K562 (cell line): ENCODE measurements at regions of chr10 and their contacts with region 1.

Region 1: DNA sequence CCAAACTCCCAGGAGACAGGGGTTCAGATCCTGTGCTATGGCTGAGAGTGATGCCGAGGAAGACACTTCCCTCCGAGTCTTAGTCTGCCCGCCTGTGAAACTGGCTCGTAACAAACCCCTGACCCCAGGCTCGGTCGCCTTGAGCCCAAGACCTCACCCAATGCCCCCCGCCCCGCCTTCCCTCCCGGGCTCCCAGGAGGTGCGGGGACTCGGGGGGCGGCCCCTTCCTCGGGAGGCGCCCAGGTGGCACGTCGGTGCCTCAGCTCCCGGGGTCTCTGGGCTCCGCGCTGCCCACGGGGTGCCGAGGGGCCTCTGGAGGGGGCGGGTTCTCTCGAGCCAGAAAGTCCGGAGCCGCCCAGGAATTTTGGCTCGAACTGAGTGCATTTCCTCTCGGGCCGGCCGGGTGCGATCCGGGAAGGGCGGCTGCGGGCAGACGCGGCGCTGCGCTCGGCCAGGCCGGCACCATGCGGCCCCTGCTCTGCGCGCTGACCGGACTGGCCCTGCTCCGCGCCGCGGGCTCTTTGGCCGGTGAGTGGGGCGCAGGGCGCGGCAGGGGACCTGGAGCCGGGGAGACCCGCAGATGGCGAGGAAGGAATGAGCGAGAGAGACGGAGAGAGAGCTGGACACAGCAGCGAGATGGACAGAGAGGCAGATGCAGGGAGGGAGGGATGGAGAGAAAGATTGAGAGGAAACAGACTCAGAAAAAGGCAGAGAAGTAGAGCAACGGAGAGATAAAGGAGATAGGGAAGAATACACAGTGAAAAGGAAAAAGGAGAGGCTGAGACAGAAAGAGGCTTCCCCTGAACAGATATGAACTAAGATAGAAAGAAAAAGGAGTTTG is at the start of gene PLAC9:
- DNase-seq: no peak
- ATAC-seq: no peak
- H3K4me3 ChIP-seq: no peak within 1 kb of the TSS
- H3K27ac ChIP-seq: no peak within 1 kb of the TSS
- H3K4me1 ChIP-seq: peaks cover 0 to 6% of the 10 kb centered on the region in 2 experiments; a peak in 1 of 5 replicates
- H3K27me3 ChIP-seq: peaks cover 34 to 54% of the 10 kb centered on the region in 2 experiments
- CTCF ChIP-seq: no peak
- EP300 ChIP-seq: no peak
- POLR2A ChIP-seq: no peak
- RAD21 ChIP-seq: no peak
- polyA plus RNA-seq, gene PLAC9: not detected

Region 2: DNA sequence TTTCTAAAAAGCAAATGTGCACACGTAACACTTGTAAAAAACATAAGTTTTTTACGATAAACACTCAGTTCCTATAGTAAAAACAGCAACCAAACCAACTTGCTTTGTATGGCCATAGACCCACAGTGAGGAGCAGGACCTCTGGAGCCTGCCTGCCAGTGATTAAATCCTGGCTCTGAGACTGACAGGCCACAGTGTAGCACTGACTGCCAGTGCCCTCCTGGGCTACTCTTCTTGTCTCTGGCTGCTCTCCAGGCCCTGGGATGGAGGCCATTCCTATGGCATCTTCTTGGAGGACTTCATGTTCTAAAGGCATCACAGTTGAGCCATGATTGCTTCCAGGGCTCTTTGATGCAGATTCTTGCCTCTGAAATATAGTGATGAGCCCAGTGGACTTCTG is 76.8 kb before region 1 on chr10:
- CTCF ChIA-PET with region 1: no interaction called
- POLR2A ChIA-PET with region 1: no interaction called
- in situ Hi-C with region 1: loop called (anchors 5 kb)
- intact Hi-C with region 1: loop called (anchors 2 kb)
- DNase-seq: no peak
- ATAC-seq: 0 out of 3 replicates have a peak, but pooled peaks have one; percentile 35
- H3K4me3 ChIP-seq: no peak overlapping the region
- H3K27ac ChIP-seq: no peak overlapping the region
- H3K4me1 ChIP-seq: no peaks in the 10 kb centered on the region
- H3K27me3 ChIP-seq: peaks cover 3 to 16% of the 10 kb centered on the region in 2 experiments; a peak in 3 of 5 replicates
- CTCF ChIP-seq: no peak
- EP300 ChIP-seq: no peak
- POLR2A ChIP-seq: no peak
- RAD21 ChIP-seq: no peak

Region 3: DNA sequence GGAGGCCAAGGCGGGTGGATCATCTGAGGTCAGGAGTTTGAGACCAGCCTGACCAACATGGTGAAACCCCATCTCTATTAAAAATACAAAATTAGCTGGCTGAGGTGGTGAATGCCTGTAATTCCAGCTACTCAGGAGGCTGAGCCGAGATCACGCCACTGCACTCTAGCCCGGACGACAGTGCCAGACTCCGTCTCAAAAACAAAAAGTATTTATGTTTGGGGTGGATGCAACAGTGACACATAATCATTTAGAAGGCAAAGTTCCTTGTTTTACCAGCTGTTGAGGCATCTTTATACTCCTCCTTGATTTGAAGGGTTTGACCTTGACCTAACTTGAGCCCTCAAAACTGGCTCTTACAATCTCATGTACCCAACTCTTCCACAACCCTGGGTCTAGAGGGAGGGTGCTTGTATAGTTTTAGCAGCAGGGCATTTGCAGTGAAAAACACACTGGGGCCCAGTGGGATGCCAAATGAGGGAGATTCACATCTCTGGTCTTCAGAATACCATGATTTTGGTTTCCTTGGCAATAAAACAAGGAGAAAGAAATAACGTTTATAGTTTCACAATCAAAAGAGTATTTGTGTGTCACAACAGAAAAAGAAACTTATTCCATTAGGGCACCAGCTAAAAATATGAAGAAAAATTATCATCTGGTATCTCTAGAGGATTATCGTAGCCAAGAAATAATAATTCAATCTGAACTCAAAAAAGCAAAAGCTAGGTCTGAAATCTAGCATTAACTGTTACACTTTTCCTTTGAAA is 68.2 kb before region 1 on chr10:
- CTCF ChIA-PET with region 1: no interaction called
- POLR2A ChIA-PET with region 1: no interaction called
- in situ Hi-C with region 1: loop called (anchors 5 kb)
- intact Hi-C with region 1: loop called (anchors 2 kb)
- DNase-seq: no peak
- ATAC-seq: no peak
- H3K4me3 ChIP-seq: no peak overlapping the region
- H3K27ac ChIP-seq: no peak overlapping the region
- H3K4me1 ChIP-seq: no peaks in the 10 kb centered on the region
- H3K27me3 ChIP-seq: peaks cover 0 to 22% of the 10 kb centered on the region in 2 experiments; a peak in 3 of 5 replicates
- CTCF ChIP-seq: no peak
- EP300 ChIP-seq: no peak
- POLR2A ChIP-seq: no peak
- RAD21 ChIP-seq: no peak

Region 4: GRCh38 chr10:80612261-80612660 is 479.7 kb after region 1 on chr10:
- CTCF ChIA-PET with region 1: no interaction called
- POLR2A ChIA-PET with region 1: no interaction called
- in situ Hi-C with region 1: no loop called
- intact Hi-C with region 1: no loop called
- DNase-seq: no peak
- ATAC-seq: no peak
- H3K4me3 ChIP-seq: no peak overlapping the region
- H3K27ac ChIP-seq: no peak overlapping the region
- H3K4me1 ChIP-seq: no peaks in the 10 kb centered on the region
- H3K27me3 ChIP-seq: peaks cover 7 to 36% of the 10 kb centered on the region in 2 experiments
- CTCF ChIP-seq: no peak
- EP300 ChIP-seq: no peak
- POLR2A ChIP-seq: no peak
- RAD21 ChIP-seq: no peak

Region 5: DNA sequence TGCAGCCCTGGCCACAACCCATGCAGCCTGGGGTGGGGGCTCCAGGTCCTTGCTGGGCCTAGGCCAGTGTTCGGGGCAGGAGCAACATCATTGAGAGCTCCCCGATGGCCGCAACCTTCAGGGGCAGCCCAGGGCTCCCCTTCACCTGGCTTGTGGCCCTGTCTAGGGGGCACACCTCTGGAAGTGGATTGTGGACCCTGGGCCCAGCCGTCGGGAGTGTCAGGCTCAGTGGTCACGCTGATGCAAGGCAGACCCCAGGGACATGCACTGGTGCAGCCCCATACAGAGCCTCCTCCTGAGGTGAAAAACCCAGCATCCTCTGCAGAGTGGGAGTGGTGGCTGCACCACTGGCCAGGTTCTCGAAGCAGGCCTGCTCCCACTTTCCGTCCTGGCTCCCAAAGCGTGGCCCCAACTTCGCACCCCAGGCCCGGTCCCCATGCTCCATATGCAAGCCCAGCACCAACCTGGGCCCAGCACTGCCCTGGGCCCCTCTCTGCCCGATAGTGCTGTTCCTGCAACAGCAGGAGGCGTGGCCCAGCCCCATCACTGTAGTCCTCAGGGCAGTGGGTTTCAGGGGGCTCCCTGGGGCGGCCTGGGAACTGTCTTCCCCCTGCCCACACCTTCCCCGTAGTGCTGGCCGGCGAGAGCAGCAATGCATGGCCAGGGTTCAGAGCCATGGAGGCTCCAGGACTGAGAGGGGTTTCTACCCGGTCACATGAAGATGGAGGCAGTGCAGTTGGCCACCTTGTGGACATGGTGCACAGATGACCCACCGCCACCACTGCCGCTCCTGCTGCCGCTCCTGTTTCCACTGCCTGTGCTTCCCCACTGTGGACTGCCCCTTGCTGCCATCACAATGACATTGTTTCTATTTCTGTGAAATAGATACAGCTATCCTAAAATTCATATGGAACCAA is 1438.6 kb after region 1 on chr10:
- CTCF ChIA-PET with region 1: no interaction called
- POLR2A ChIA-PET with region 1: no interaction called
- in situ Hi-C with region 1: no loop called
- intact Hi-C with region 1: no loop called
- DNase-seq: no peak
- ATAC-seq: no peak
- H3K4me3 ChIP-seq: no peak overlapping the region
- H3K27ac ChIP-seq: no peak overlapping the region
- H3K4me1 ChIP-seq: no peaks in the 10 kb centered on the region
- H3K27me3 ChIP-seq: no peaks in the 10 kb centered on the region
- CTCF ChIP-seq: no peak
- EP300 ChIP-seq: no peak
- POLR2A ChIP-seq: no peak
- RAD21 ChIP-seq: no peak